PC-9 (cell line): ENCODE measurements at regions of chrX and their contacts with region 1.

Region 1: DNA sequence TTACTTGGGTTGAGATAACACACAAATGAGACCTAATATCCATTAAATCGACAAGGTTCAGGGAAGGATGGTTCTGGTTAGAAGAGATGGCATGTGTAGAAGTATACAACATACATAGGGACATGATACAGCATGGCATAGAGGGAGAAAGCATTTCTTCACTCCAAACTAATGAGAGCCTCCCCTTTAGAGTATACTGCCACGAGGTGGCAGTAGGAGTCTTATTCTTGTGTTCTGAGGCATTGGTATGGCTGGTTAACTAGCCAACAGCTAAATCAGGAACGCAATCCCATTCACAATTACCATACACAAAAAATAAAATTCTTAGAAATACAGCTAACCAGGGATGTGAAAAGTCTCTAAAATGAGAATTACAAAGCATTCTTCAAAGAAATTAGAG is 29.1 kb upstream of the TRO start:
- DNase-seq: peak in 1 of 2 experiments; percentile 28
- H3K4me3 ChIP-seq: no peak overlapping the region
- H3K27ac ChIP-seq: no peak overlapping the region
- H3K4me1 ChIP-seq: no peaks in the 10 kb centered on the region
- H3K27me3 ChIP-seq: no peaks in the 10 kb centered on the region
- CTCF ChIP-seq: peak; percentile 59

Region 2: DNA sequence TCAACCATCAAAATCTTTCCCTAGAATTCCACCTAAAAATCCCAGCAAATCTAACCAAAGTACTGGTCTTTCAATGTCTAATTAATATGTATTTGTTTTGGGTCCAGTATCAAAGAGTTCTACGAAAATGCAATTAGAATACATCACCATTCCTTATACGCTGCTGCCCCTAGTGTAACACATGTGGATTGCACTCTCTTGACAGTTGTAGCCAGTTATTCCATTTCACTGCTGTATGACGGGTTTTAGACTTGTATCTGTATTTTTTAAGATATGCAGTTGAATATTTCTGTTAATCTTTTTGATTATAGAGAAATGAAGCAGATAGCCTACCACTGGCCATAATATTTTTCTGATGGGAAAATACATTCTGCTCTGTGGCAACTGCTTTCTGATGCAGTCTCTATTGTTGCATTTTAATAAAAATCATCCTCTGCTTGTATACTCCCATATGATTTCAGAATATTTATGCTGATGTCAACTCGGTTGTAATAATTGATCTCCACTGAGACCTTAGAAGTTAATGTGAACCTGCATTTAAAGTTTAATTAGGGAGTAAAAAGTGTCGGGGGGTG is 166.2 kb after region 1 on chrX:
- CTCF ChIA-PET with region 1: no interaction called
- POLR2A ChIA-PET with region 1: no interaction called
- intact Hi-C with region 1: loop called (anchors 5 kb)
- DNase-seq: peak in 1 of 2 experiments; percentile 12
- H3K4me3 ChIP-seq: no peak overlapping the region
- H3K27ac ChIP-seq: no peak overlapping the region
- H3K4me1 ChIP-seq: no peaks in the 10 kb centered on the region
- H3K27me3 ChIP-seq: no peaks in the 10 kb centered on the region
- CTCF ChIP-seq: peak; percentile 87